Posterior vena cava (tissue), 2 donors: ENCODE measurements at regions of chr11 and their contacts with region 1.

Region 1: GRCh38 chr11:19951558-19952115 is 208.6 kb downstream of the DBX1 start:
- DNase-seq: no peak

Region 2: DNA sequence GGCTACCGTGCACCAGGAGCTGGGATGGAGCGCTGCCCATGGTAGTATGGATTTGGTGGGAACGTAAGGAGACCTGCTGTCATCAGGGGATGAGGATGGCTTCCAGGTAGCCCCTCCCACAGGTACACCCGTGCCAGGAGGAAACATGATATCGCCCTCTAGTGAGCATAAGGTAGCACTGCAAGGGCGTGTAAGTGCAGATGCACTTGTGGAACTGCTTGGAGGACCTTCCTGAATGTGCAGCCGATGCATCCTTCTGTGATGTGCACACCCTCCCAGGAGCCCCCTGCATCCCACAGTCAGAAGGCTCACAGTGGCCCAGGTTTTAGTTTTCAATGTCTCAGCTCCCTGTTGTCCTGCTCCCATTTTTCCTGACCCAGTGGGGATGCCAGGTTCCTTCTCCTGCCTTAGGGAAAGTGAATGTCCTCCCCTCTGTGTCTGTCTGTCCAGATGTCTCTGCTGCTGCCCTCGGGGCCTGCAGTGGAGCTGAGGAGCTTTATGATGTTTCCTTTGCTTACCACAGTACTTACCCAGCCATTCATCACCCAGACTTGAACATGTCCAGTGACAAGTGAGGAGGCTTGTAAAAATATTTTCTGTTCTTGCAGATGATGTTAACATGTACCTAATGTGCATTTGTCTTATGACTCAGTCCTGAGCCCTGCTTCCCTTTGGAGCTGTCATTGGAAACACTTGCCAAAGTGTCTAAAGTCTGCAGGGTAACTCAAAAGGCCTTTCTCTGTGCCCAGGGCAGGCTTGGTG is 159.5 kb after region 1 on chr11:
- intact Hi-C with region 1: loop called in 1 of 2 experiments (anchors 10 kb)
- DNase-seq: no peak

Region 3: GRCh38 chr11:20127671-20128527 is 176.3 kb after region 1 on chr11:
- intact Hi-C with region 1: loop called (anchors 1 to 5 kb)
- DNase-seq: peak; percentile 91